Activated CD4-positive, alpha-beta memory T cell treated with anti-CD3 and anti-CD28 coated beads for 36 hours (primary cell): ENCODE measurements at regions of chr19 and their contacts with region 1.

Region 1: GRCh38 chr19:1605236-1606137 is at the start of gene UQCR11:
- DNase-seq: peak; percentile 96
- H3K4me3 Mint-ChIP-seq: peak within 1 kb of the TSS; percentile 88
- H3K27ac Mint-ChIP-seq: peak within 1 kb of the TSS; percentile 94
- H3K4me1 Mint-ChIP-seq: peaks cover 44% of the 10 kb centered on the region
- H3K27me3 Mint-ChIP-seq: no peaks in the 10 kb centered on the region
- total RNA-seq, gene UQCR11: 266 to 277 TPM

Region 2: GRCh38 chr19:1269065-1269477 is 336.4 kb before region 1 on chr19 and contains the start of gene CIRBP:
- CTCF ChIA-PET with region 1: no interaction called
- POLR2A ChIA-PET with region 1: no interaction called
- intact Hi-C with region 1: loop called (anchors 1 kb)
- DNase-seq: peak; percentile 100
- H3K4me3 Mint-ChIP-seq: peak within 1 kb of the TSS; percentile 90
- H3K27ac Mint-ChIP-seq: peak within 1 kb of the TSS; percentile 89
- H3K4me1 Mint-ChIP-seq: peaks cover 64% of the 10 kb centered on the region
- H3K27me3 Mint-ChIP-seq: no peaks in the 10 kb centered on the region
- total RNA-seq, gene CIRBP: 171 to 173 TPM

Region 3: DNA sequence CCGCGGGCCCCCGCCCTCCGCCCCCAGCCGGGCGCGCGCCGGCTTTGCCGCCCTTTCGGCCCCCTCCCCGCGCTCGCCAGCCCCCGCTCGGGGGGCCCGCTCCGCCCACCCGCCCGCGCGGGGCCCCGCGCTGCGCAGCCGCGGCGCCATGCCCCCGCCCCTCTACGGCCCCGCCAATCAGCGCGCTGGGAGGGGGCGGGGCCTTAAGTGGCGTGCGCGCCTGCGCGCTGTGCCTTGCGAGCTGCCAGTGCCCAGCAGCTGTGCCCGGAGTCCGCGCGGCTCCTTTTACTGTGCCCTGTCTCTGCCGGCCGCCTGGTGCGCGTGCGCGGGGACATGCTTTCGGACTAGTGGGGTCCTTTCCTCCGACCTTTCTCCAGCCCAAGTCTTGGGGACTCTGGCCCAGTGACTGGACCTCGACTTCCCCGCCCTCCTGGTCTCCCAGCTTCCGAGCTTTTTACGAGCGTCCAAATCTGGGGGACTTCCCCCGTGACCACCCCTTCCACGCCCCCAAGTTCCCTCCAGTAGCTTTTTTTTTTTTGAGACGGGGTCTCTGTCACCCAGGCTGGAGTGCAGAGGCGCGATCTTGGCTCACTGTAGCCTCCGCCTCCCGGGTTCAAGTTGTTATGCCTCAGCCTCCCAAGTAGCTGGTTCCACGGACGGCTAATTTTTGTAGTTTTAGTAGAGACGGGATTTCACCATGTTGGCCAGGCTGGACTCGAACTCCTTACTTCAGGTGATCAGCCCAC is 12.6 kb before region 1 on chr19 and contains the start of gene MBD3:
- CTCF ChIA-PET with region 1: interaction called, 4 read pairs
- POLR2A ChIA-PET with region 1: interaction called, 10 read pairs
- intact Hi-C with region 1: loop called (anchors 1 kb)
- DNase-seq: peak; percentile 90
- H3K4me3 Mint-ChIP-seq: peak within 1 kb of the TSS; percentile 86
- H3K27ac Mint-ChIP-seq: peak within 1 kb of the TSS; percentile 84
- H3K4me1 Mint-ChIP-seq: peaks cover 16% of the 10 kb centered on the region
- H3K27me3 Mint-ChIP-seq: no peaks in the 10 kb centered on the region
- total RNA-seq, gene MBD3: 67.7 to 71.4 TPM

Region 4: GRCh38 chr19:1652471-1653299 is 47.2 kb after region 1 on chr19 and contains the start of gene TCF3:
- CTCF ChIA-PET with region 1: no interaction called
- POLR2A ChIA-PET with region 1: interaction called, 18 read pairs
- intact Hi-C with region 1: loop called (anchors 1 kb)
- DNase-seq: peak; percentile 99
- H3K4me3 Mint-ChIP-seq: peak within 1 kb of the TSS; percentile 84
- H3K27ac Mint-ChIP-seq: peak within 1 kb of the TSS; percentile 83
- H3K4me1 Mint-ChIP-seq: peaks cover 29% of the 10 kb centered on the region
- H3K27me3 Mint-ChIP-seq: no peaks in the 10 kb centered on the region
- total RNA-seq, gene TCF3: 88.9 to 95.5 TPM

Region 5: DNA sequence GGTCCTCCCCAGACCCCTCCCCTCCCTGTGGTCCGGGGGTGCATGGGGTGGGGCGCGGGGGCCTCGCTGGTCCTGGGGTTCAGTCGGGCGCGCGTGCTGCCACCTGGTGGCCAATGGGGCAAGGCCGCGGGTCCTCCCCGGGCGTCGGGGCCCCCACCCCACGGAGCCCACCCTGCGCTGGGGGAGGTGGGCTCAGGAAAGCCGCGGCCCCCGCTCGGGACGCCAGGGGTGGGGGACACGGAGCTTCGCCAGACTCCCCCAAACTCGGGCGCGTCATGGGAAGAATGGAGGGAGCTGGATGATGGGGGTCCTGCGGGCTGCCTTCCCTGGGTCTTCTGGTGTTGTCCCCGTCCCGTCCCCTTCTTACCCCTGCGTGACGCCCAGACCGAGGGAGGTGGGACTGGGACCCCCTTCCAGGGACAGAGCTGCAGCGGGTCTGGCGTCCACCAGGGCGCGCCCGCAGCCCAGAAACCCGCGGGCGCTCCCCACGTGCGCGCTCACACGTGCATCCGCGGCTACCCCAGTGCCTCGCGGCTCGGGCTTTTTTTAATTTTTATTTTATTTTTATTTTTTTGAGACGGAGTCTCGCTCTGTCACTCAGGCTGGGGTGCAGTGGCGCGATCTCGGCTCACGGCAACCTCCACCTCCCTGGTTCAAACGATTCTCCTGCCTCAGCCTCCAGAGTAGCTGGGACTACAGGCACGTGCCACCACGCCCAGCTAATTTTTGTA is 66.7 kb after region 1 on chr19:
- CTCF ChIA-PET with region 1: interaction called, 24 read pairs
- POLR2A ChIA-PET with region 1: no interaction called
- intact Hi-C with region 1: loop called (anchors 5 kb)
- DNase-seq: peak; percentile 58
- H3K4me3 Mint-ChIP-seq: no peak overlapping the region
- H3K27ac Mint-ChIP-seq: no peak overlapping the region
- H3K4me1 Mint-ChIP-seq: peaks cover 16% of the 10 kb centered on the region
- H3K27me3 Mint-ChIP-seq: peaks cover 46% of the 10 kb centered on the region